HAP-1 (cell line): ENCODE measurements at regions of chr11 and their contacts with region 1.

Region 1: GRCh38 chr11:57567515-57568329 is at the start of gene UBE2L6:
- DNase-seq: peak; percentile 41 to 67
- H3K4me3 ChIP-seq: peak within 1 kb of the TSS; percentile 66
- H3K4me1 ChIP-seq: peaks cover 2% of the 10 kb centered on the region; the same call in 1 of the 2 replicates
- H3K27me3 ChIP-seq: no peaks in the 10 kb centered on the region

Region 2: DNA sequence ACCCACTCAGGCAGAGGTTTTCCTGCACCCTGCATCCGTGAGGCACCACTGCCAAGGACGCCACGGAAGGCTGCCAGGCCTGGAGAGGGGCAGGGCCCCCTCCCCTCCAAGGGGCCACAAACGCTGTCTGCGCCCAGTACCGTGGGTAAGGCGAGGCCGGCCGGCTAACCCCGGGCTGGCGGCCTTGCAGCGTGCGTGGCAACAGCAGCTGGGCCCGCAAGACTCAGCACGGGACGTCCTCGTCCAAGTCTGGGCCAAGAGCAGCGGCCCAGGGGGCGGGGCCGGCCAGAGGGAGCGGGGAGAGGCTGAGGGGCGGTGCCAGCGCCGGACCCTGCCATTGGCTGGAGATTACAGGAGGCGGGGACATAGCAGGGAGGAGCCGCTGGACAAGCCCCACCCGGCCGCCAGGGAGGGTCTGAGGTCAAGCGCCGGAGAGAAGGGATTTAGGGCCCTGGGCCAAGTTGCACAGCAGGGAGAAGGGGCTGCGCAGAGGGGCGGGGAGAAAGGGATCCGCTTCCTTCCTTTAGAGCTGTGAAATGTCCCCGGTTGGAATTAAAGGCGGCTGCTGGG is 68.2 kb before region 1 on chr11:
- in situ Hi-C with region 1: no loop called
- DNase-seq: peak; percentile 91 to 96
- H3K4me3 ChIP-seq: no peak overlapping the region
- H3K4me1 ChIP-seq: peaks cover 8% of the 10 kb centered on the region
- H3K27me3 ChIP-seq: no peaks in the 10 kb centered on the region

Region 3: GRCh38 chr11:57644748-57645688 is 77.3 kb after region 1 on chr11:
- in situ Hi-C with region 1: loop called (anchors 5 kb)
- DNase-seq: peak; percentile 70 to 91
- H3K4me3 ChIP-seq: no peak overlapping the region
- H3K4me1 ChIP-seq: peaks cover 13% of the 10 kb centered on the region
- H3K27me3 ChIP-seq: peaks cover 20% of the 10 kb centered on the region

Region 4: GRCh38 chr11:57974848-57975601 is 407.3 kb after region 1 on chr11:
- in situ Hi-C with region 1: no loop called
- DNase-seq: no peak
- H3K4me3 ChIP-seq: no peak overlapping the region
- H3K4me1 ChIP-seq: no peaks in the 10 kb centered on the region
- H3K27me3 ChIP-seq: no peaks in the 10 kb centered on the region